Mammary epithelial cell (primary cell): ENCODE measurements at regions of chr2 and their contacts with region 1.

Region 1: GRCh38 chr2:148989882-148990493 is 48.5 kb upstream of the LYPD6B start:
- DNase-seq: peak; percentile 53
- H3K4me3 ChIP-seq: no peak overlapping the region
- H3K27ac ChIP-seq: no peak overlapping the region
- H3K4me1 ChIP-seq: no peaks in the 10 kb centered on the region
- H3K27me3 ChIP-seq: no peaks in the 10 kb centered on the region
- CTCF ChIP-seq: peak; percentile 66 to 80

Region 2: DNA sequence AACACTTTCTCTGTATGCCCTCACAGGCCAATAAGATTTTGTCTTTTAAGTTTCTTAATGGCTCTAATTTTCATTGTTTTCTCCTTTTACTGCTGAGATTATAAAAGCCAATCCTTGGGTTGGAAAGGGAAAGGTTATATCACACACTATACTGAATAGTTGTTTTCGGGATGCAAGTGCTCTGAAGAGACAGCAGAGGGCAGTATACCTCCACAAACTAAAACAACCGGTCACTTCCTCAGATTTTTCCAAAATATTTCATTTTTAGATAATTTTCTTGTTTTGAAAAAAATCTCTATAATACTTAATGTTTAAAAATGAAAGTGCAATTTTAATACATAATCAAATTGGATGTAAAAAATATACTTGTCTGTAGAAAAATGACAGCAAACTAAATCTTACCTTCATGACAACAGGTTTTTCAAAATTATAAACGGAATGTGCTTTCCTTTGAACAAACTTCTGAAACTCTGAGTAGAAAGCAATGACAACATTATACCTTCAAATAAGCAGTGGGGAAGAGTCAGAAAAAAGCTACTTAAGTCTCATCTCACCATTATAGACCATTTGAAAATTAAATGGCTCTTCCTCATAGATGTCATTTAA is 1052.1 kb before region 1 on chr2:
- CTCF ChIA-PET with region 1: no interaction called
- dilution Hi-C with region 1: no loop called
- in situ Hi-C with region 1: no loop called
- intact Hi-C with region 1: loop called (anchors 1 kb)
- DNase-seq: peak; percentile 3
- H3K4me3 ChIP-seq: no peak overlapping the region
- H3K27ac ChIP-seq: no peak overlapping the region
- H3K4me1 ChIP-seq: no peaks in the 10 kb centered on the region
- H3K27me3 ChIP-seq: no peaks in the 10 kb centered on the region
- CTCF ChIP-seq: peak; percentile 76 to 88

Region 3: DNA sequence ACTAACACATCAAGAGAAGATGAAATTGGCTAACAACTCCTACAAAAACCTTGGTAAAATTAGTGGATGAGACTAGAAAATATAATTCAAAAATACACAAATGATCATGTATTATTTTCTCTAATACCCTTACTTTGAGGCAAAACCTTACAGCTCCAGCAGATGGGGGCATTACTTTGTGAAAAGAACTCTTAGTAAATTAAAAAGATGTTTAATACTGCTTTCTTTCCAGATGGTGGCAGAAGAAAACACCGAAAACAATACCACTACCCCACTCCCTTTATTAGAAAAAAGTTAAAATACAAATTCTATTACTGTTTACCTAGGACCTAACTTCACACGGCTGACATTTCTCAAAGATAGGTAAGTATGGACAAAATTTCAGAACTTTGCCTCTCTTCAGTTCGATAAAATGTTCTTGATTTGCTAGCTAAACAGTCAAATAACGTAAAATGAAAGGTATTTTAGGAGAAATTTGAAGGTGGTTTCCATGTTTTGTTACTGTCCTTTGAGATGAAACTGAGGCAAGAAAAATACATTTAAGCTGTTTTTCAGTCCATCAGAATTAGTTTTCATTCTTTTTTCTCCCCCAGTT is 1000.1 kb before region 1 on chr2:
- CTCF ChIA-PET with region 1: no interaction called
- dilution Hi-C with region 1: no loop called
- in situ Hi-C with region 1: loop called (anchors 25 kb)
- intact Hi-C with region 1: loop called (anchors 1 kb)
- DNase-seq: peak; percentile 10
- H3K4me3 ChIP-seq: no peak overlapping the region
- H3K27ac ChIP-seq: no peak overlapping the region
- H3K4me1 ChIP-seq: no peaks in the 10 kb centered on the region
- H3K27me3 ChIP-seq: no peaks in the 10 kb centered on the region
- CTCF ChIP-seq: peak; percentile 31 to 57

Region 4: GRCh38 chr2:148201075-148202004 is 788.6 kb before region 1 on chr2:
- CTCF ChIA-PET with region 1: no interaction called
- dilution Hi-C with region 1: no loop called
- in situ Hi-C with region 1: no loop called
- intact Hi-C with region 1: loop called (anchors 1 kb)
- DNase-seq: peak; percentile 37
- H3K4me3 ChIP-seq: no peak overlapping the region
- H3K27ac ChIP-seq: no peak overlapping the region
- H3K4me1 ChIP-seq: no peaks in the 10 kb centered on the region
- H3K27me3 ChIP-seq: no peaks in the 10 kb centered on the region
- CTCF ChIP-seq: peak; percentile 48 to 64

Region 5: GRCh38 chr2:148565272-148565894 is 424.6 kb before region 1 on chr2:
- CTCF ChIA-PET with region 1: no interaction called
- dilution Hi-C with region 1: no loop called
- in situ Hi-C with region 1: no loop called
- intact Hi-C with region 1: loop called (anchors 1 kb)
- DNase-seq: no peak
- H3K4me3 ChIP-seq: no peak overlapping the region
- H3K27ac ChIP-seq: no peak overlapping the region
- H3K4me1 ChIP-seq: no peaks in the 10 kb centered on the region
- H3K27me3 ChIP-seq: no peaks in the 10 kb centered on the region
- CTCF ChIP-seq: peak in 1 of 2 donors; percentile 34